ENCODE measurements at regions of chr12 and their contacts with region 1.

Region 1: DNA sequence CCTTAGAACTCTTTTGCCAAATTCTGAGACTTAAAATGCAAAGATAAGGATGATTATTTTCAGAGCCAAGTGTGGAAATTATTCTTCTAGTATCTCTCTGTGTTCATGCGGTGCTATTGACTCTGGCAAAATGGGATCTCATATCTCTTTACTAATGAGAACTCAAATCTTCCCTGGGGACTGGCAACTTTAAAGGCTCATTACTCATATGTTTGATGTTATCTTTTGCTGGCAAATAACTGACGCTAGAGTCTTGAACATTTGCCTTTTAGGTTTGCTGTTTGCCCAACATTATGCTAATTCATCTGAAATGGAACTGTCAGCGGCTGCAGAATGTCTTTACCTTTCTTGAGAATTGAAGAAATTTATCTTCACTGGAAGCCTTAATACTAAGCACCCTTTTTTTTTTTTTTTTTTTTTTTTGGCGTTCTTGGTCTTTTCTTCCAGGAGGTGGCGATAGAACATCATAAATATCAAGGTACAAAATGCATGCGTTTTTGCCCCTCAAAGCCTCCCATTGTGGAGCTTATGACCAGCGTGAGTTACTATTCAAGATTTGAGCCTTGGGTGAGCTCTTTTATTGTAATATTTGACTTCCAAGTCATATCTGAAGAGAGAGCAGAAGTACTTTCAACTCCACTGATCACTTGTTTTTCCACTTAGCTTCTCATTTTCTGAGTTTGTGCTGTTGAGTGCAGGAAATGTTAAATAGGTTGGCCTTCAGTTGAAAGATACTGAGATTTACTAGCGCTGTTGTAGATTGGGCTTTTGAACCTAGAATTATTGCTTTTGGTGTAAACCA is 86.6 kb downstream of the CAND1 start:
- DNase-seq: no peak
- H3K4me3 ChIP-seq: peak overlapping the region in 4 of 59 donors; percentile 9 to 30 (median 20)
- H3K27ac ChIP-seq: peak overlapping the region in 3 of 59 donors; percentile 8 to 54 (median 30)
- H3K27me3 ChIP-seq: peaks cover 0 to 6% (median 0%) of the 10 kb centered on the region in 45 donors
- CTCF ChIP-seq: peak; percentile 44 to 90 (median 70)

Region 2: DNA sequence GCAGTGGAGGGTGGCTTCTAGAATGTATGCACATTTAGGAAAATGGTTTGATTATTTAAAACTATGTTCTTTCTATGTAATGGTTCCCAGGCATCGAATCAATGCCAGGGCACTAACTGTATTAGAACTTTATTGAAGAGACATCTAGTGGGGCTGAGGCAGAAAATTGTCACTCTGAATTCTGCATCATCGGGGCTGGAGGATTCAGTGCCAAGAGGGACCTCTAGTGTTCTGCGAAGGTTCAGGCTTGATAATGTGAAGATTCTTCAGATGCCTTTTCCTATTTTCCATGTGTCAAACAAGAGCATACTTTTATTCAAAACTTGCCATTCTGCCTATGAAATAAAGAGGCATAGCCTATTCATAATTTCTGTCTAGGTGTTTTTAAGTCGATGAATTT is 59.7 kb after region 1 on chr12:
- intact Hi-C with region 1: loop called (anchors 2 to 10 kb)
- DNase-seq: peak in 3 of 10 donors; percentile 40 to 57 (median 44)
- H3K4me3 ChIP-seq: no peak overlapping the region
- H3K27ac ChIP-seq: no peak overlapping the region
- H3K27me3 ChIP-seq: no peaks in the 10 kb centered on the region
- CTCF ChIP-seq: peak in 55 of 56 donors; percentile 20 to 76 (median 58)